Activated T-helper 2 cell treated with anti-CD3 and anti-CD28 coated beads, Interferon-gamma antibody, Interleukin-2, Interleukin-4, amounts not matched to agents 10 μg/mL and 5 μg/mL and 100 μg/mL, durations not matched to agents 14 hours and 24 hours and 36 hours (primary cell): ENCODE measurements at regions of chr10 and their contacts with region 1.

Region 1: GRCh38 chr10:120850911-120851865 is at the start of gene WDR11:
- DNase-seq: peak; percentile 63
- H3K4me3 Mint-ChIP-seq: peak within 1 kb of the TSS; percentile 98
- H3K27ac Mint-ChIP-seq: peak within 1 kb of the TSS; percentile 92
- H3K4me1 Mint-ChIP-seq: peaks cover 37% of the 10 kb centered on the region
- H3K27me3 Mint-ChIP-seq: no peaks in the 10 kb centered on the region
- total RNA-seq, gene WDR11: 54.8 and 55.2 TPM in 2 replicates

Region 2: DNA sequence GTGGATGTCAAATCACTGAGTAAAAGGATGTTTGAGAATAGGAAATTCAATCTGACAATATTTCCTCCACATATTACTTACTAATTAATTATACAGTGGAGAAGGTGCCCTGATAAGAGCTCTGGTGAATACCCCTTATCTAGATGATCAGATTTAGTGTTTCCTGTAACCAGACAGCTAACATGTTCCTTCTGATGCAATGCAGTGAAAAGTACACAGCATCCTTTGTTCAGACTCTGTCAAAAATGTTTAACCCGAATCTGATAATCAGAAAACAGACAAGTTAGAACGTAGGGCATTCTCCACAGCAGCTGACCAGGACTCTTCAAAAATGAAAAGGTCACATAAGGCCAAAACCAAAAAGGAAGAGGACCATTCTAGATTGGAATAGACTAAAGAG is 46.2 kb after region 1 on chr10:
- intact Hi-C with region 1: loop called (anchors 5 kb)
- DNase-seq: no peak
- H3K4me3 Mint-ChIP-seq: peak overlapping the region; percentile 19
- H3K27ac Mint-ChIP-seq: peak overlapping the region; percentile 64
- H3K4me1 Mint-ChIP-seq: peaks cover 20% of the 10 kb centered on the region
- H3K27me3 Mint-ChIP-seq: no peaks in the 10 kb centered on the region

Region 3: DNA sequence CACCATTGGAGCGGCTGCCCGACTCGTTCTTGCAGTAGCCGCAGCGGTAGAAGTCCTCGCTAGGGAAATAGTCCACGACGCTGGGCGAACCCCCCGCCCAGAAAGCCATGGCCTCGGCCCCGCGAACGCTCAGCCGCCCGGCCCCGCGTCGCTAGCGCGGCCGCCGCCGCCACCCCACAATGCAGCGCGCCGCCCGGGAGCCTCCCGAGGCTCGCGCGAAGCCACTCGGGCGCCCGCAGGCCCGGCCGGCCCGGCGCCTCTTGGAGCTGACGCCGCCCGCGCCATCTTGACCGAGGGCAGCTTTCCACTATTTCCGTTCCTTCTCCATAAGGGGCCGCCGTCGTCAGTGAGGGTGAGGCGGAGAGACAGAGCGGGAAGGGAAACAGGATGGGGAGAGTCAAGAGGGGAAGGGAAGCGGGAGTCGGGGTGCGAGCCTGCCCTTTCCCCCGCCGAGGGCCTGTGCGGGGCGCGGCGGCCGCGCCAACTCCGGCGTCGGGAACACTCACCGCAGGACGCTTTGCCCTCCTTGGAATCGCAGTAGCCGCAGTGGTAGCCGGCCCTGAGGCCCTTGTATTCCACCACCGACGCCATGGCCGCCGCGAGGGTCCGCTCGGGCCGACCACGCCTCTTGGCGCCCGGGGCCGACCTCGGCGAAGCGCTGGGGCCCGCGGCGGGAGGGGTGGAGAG is 1076.8 kb after region 1 on chr10 and contains the start of gene ATE1:
- intact Hi-C with region 1: loop called (anchors 2 kb)
- DNase-seq: peak; percentile 77
- H3K4me3 Mint-ChIP-seq: peak within 1 kb of the TSS; percentile 94
- H3K27ac Mint-ChIP-seq: peak within 1 kb of the TSS; percentile 98
- H3K4me1 Mint-ChIP-seq: peaks cover 18% of the 10 kb centered on the region
- H3K27me3 Mint-ChIP-seq: no peaks in the 10 kb centered on the region
- total RNA-seq, gene ATE1: 33.6 and 34.9 TPM in 2 replicates